ENCODE measurements at regions of chr7 and their contacts with region 1.

Region 1: GRCh38 chr7:26376175-26376917 is 84.7 kb downstream of the SNX10 start:
- DNase-seq: peak; percentile 22 to 43 (median 24)
- H3K4me3 ChIP-seq: peak overlapping the region; percentile 26 to 56
- H3K4me3 Mint-ChIP-seq: peak overlapping the region; percentile 83 to 95 (median 88)
- H3K27ac ChIP-seq: no peak overlapping the region
- H3K27ac Mint-ChIP-seq: peak overlapping the region in 2 of 7 donors; percentile 24 to 75
- H3K4me1 ChIP-seq: peaks cover 8% of the 10 kb centered on the region
- H3K4me1 Mint-ChIP-seq: peaks cover 0 to 7% (median 5%) of the 10 kb centered on the region in 4 donors
- H3K27me3 ChIP-seq: peaks cover 11% of the 10 kb centered on the region
- H3K27me3 Mint-ChIP-seq: peaks cover 13 to 23% of the 10 kb centered on the region in 2 donors

Region 2: GRCh38 chr7:25951031-25951948 is 425.1 kb before region 1 on chr7:
- CTCF ChIA-PET with region 1: no interaction called
- POLR2A ChIA-PET with region 1: no interaction called
- intact Hi-C with region 1: loop called (anchors 5 kb)
- DNase-seq: peak; percentile 84 to 94 (median 88)
- H3K4me3 ChIP-seq: peak overlapping the region in 1 of 2 donors; percentile 69
- H3K4me3 Mint-ChIP-seq: peak overlapping the region; percentile 91 to 93 (median 92)
- H3K27ac ChIP-seq: peak overlapping the region; percentile 25
- H3K27ac Mint-ChIP-seq: peak overlapping the region; percentile 69 to 89 (median 84)
- H3K4me1 ChIP-seq: peaks cover 14% of the 10 kb centered on the region
- H3K4me1 Mint-ChIP-seq: peaks cover 6 to 27% (median 17%) of the 10 kb centered on the region in 4 donors
- H3K27me3 ChIP-seq: no peaks in the 10 kb centered on the region
- H3K27me3 Mint-ChIP-seq: no peaks in the 10 kb centered on the region